BJ (cell line): ENCODE measurements at regions of chr12 and their contacts with region 1.

Region 1: GRCh38 chr12:116434155-116435011 is 124.8 kb upstream of the MAP1LC3B2 start:
- DNase-seq: peak; percentile 81
- H3K4me3 ChIP-seq: peak overlapping the region; percentile 36
- H3K27me3 ChIP-seq: no peaks in the 10 kb centered on the region
- CTCF ChIP-seq: no peak

Region 2: DNA sequence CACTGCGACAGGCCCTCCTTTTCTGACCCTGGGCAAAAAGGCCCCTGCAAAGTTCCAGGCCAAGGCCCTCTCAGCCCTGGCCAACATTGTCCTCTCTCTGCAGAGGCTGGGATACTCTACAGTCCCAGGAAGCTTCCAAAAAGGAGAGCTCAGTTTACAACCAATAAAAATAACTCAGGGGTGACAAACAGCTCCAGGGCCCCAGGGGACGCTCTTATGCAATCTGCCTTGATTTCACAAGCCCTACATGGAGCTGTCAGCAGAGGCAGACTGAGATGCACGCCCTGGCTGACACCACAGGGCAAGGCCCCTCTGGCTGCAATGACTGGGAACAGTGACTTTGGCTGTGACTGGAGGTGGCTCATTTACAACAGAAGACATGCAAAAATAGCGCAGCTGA is 27.9 kb before region 1 on chr12:
- CTCF ChIA-PET with region 1: no interaction called
- POLR2A ChIA-PET with region 1: interaction called, 13 read pairs
- DNase-seq: peak; percentile 91
- H3K4me3 ChIP-seq: no peak overlapping the region
- H3K27me3 ChIP-seq: no peaks in the 10 kb centered on the region
- CTCF ChIP-seq: peak; percentile 21; the same call in 1 of the 2 replicates

Region 3: GRCh38 chr12:116444590-116444943 is 10.2 kb after region 1 on chr12:
- CTCF ChIA-PET with region 1: no interaction called
- POLR2A ChIA-PET with region 1: no interaction called
- DNase-seq: no peak
- H3K4me3 ChIP-seq: no peak overlapping the region
- H3K27me3 ChIP-seq: no peaks in the 10 kb centered on the region
- CTCF ChIP-seq: no peak

Region 4: DNA sequence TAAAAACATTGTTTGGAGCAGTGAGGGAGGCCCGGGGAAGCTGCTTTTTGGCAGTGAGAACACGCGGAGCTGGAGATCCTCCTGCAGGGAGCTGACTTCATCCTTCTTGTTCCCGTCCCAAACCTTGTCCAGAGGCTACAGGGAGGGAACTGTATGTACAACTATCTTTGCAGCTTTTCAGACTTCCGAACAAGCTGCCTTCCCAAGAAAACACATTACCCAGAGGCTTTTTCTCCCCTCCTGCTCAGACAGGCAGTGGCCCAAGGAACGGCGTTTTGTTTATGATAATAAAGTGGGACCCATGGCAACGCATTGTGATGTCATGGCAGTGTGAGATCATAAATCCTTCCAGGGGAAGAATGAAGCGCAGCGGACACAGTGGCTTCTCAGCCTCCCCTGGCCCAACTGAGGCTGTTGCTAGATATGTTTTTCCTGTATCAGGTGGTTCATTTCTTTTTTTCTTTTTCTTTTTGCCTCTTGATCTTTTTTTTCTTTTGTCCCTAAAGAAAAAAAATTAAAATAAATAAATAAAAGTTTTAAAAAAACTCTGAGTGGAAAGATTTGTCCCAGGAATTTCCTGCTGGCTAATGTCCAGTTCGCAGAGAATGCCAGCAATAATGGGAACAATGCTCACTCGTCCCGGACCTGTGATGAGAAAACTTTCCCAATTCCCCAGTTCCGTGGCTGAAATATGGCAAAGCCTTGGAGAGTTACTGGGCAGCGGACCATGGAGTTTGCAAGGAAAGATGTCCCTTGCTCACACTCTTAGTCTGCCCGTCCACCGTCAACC is 21.4 kb after region 1 on chr12:
- CTCF ChIA-PET with region 1: interaction called, 3 read pairs
- POLR2A ChIA-PET with region 1: interaction called, 18 read pairs
- DNase-seq: peak; percentile 87
- H3K4me3 ChIP-seq: no peak overlapping the region
- H3K27me3 ChIP-seq: no peaks in the 10 kb centered on the region
- CTCF ChIP-seq: no peak

Region 5: GRCh38 chr12:116525418-116526001 is 91.1 kb after region 1 on chr12:
- CTCF ChIA-PET with region 1: no interaction called
- POLR2A ChIA-PET with region 1: interaction called, 18 read pairs
- DNase-seq: no peak
- H3K4me3 ChIP-seq: no peak overlapping the region
- H3K27me3 ChIP-seq: no peaks in the 10 kb centered on the region
- CTCF ChIP-seq: no peak